ENCODE measurements at regions of chr7 and their contacts with region 1.

Region 1: DNA sequence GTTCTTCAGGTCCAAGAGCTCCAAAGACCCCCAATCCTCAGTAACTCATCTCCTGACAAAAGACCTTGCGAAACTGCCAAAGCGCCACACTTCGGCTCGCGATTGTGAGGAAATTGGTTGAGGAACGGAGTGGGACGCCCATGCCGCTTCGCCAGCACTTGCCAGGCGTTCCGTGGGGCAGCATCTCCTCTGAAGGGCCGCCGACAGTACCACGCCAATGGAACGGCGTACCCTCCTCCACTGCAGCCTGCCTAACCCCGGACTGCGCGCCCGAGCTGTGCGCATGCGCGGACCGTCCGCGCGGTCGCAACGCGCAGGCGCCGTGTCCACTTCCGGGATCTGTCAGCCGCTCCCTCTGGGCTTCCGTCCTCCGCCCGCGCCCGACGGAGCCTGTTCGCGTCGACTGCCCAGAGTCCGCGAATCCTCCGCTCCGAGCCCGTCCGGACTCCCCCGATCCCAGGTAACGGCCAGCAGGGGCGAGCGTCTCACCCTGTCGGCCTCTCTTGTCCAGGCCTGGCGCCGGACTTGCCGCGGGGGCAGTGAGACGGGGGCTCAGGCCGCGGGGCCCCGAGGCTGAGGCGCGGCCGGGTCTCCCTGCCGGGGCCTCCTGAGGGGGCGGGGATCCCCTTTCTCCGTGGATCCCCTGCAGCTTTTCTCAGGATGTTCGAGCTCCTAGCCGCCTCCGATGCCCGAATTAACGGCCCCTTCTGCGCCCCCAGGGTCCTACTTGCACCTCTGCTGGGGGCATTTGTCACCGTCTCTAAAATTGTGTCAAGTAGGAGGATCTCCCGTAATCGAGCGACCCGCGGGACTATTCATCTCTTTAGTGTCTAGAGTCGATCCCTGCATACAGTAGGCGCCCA is at the start of gene ARPC1A:
- DNase-seq: peak; percentile 96
- H3K27ac ChIP-seq: peak within 1 kb of the TSS; percentile 85
- CTCF ChIP-seq: no peak

Region 2: DNA sequence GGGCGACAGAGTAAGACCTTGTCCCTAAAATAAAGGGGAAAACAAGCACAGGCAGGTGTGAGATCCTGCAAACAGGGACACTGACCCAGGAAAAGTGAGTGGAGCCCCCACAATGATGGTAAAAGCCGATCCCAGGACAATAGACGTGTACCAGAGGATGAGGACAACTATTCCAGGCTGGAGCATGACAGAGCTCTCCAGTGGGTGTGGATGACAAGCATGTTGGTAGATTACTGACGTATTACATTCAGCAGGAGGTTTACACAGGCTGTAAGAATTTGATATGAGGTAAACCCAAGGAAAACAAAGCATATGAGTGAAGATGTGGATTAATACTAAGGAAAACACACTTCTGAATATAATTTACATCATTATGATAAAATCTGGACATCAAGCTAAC is 154.0 kb before region 1 on chr7:
- CTCF ChIA-PET with region 1: no interaction called
- POLR2A ChIA-PET with region 1: interaction called, 11 read pairs
- DNase-seq: no peak
- H3K27ac ChIP-seq: no peak overlapping the region
- CTCF ChIP-seq: no peak